ENCODE measurements at regions of chr9 and their contacts with region 1.

Region 1: DNA sequence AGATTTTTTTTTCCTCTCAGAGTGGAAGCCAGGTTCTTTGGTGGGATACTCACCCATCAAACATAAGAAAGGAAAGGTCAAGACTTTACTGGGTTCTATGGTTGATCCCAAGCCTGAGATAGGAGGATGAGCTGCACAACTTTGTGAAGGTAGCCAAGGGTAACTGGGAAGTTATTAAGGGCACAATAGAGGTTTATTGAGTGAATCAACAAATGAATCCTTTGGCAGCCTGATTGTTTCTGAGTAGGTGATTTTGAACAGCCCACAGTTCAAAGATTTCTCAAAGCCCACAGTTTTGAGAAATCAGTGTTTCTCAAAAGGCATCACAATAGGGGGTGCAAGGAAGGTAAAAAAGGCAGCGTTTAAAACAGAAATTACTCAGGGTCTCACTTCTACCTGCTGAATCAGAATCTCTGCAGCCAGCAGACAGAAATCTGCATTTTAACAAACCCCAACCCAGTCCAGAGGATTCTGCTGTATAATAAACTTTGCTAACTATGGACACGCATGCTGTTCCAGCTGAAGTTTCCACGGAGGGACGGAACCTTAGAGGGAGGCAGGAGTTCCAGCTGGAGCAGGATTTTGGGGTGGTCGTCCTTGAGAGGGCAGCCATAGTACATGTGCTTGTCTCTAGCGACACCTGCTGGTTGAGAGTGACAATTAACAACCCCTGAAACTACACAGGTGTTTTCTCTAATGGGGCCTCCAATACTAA is 32.7 kb upstream of the FSD1L start:
- H3K4me3 ChIP-seq: no peak overlapping the region
- H3K27ac ChIP-seq: no peak overlapping the region
- H3K4me1 ChIP-seq: no peaks in the 10 kb centered on the region
- CTCF ChIP-seq: 0 out of 2 replicates have a peak, but pooled peaks have one; percentile 52

Region 2: DNA sequence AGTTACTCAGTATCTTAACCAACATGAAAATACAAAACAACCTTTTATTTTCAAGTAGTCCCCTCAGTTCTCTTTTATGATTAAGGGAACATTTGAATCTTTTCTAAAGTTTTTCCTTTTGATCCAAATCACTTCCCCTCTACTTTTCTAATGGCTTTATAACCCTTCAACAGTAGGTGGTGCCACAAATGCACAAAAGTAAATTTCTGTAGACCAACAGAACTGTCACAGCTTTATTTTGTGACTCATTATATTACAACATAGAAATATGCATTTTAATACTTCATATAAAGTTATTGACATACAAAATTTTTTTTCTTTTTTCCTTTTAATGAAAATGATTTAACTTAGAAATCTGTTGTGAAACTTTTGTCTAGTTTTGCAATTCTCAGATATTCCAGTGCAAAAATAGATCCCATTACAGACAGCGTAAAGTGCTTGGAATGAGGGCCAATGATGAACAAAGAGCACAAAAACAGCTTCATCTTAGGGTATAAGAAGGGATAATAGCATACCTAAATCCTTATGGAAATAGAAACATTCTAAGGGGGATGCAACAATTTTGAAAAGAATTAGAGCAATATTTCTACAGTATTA is 634.2 kb before region 1 on chr9:
- CTCF ChIA-PET with region 1: interaction called, 14 read pairs
- POLR2A ChIA-PET with region 1: no interaction called
- H3K4me3 ChIP-seq: no peak overlapping the region
- H3K27ac ChIP-seq: no peak overlapping the region
- H3K4me1 ChIP-seq: no peaks in the 10 kb centered on the region
- CTCF ChIP-seq: no peak

Region 3: GRCh38 chr9:104808035-104808614 is 607.0 kb before region 1 on chr9:
- CTCF ChIA-PET with region 1: interaction called, 13 read pairs
- POLR2A ChIA-PET with region 1: no interaction called
- H3K4me3 ChIP-seq: no peak overlapping the region
- H3K27ac ChIP-seq: no peak overlapping the region
- H3K4me1 ChIP-seq: no peaks in the 10 kb centered on the region
- CTCF ChIP-seq: no peak

Region 4: DNA sequence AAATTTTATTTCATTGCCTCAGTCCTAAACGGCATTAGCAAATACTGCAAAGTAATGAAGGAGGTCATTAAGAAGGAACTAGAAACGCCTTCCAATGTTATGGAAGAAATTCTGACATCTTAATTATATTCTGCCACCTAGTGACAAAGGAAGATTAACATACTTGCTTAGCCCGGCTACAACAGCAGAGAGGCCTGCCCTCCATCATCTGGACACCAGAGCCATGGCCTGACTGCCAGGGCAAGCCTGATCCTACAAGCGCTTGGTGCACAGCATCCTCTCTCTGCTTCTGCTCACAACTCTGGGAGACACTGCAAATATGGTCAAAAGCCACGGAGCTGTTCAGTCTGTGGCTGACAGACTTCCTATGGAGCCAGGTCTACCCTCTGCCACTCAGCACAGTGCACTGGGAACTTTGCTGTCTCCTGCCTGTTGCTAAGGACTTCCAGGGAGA is 257.9 kb before region 1 on chr9:
- CTCF ChIA-PET with region 1: interaction called, 43 read pairs
- POLR2A ChIA-PET with region 1: no interaction called
- H3K4me3 ChIP-seq: no peak overlapping the region
- H3K27ac ChIP-seq: no peak overlapping the region
- H3K4me1 ChIP-seq: no peaks in the 10 kb centered on the region
- CTCF ChIP-seq: no peak

Region 5: GRCh38 chr9:105431424-105432246 is 16.5 kb after region 1 on chr9:
- CTCF ChIA-PET with region 1: interaction called, 16 read pairs
- POLR2A ChIA-PET with region 1: no interaction called
- H3K4me3 ChIP-seq: no peak overlapping the region
- H3K27ac ChIP-seq: no peak overlapping the region
- H3K4me1 ChIP-seq: no peaks in the 10 kb centered on the region
- CTCF ChIP-seq: no peak

Region 6: DNA sequence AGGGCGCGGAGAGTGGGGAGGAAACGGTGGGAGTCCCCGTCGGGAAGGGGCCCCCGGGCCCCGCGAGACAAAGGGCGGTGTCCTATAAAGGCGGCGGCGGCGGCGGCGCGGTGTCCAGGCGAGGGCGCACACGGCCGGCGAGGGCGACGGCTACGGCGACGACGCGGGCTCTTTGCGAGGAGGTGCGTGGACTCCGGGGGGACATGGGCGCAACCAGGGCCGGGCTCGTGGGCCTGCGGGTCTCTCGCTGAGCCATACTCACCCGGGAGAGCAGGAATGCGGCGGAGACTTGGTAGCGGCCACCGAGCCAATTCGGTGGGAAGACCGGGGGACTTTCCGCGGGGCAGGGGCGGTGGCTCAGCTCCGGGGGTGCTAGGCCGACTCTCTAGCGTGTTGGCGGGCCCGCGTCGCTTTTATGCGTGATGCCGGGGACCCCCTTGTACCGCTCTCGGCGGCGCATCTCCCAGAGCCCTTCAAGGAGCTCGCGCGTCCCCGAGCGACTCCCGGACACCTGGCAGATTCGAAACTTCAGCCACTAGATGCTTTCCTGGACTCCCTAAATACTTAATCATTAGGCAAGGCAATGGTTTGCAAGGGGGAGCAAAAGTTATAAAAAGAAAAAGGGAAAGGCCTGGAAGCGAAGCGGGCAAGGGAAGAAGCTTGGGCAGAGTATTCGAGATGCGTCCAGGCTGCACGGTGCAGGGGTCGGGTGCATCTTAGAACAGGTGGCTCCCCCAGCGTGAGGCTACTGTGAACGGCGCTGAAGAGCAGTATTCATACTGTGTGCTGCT is 241.2 kb after region 1 on chr9:
- CTCF ChIA-PET with region 1: no interaction called
- POLR2A ChIA-PET with region 1: no interaction called
- H3K4me3 ChIP-seq: peak overlapping the region; percentile 52
- H3K27ac ChIP-seq: peak overlapping the region; percentile 48; the same call in 1 of the 2 replicates
- H3K4me1 ChIP-seq: peaks cover 6% of the 10 kb centered on the region
- CTCF ChIP-seq: no peak

Region 7: GRCh38 chr9:105690747-105691146 is 275.6 kb after region 1 on chr9:
- CTCF ChIA-PET with region 1: no interaction called
- POLR2A ChIA-PET with region 1: no interaction called
- H3K4me3 ChIP-seq: no peak overlapping the region
- H3K27ac ChIP-seq: no peak overlapping the region
- H3K4me1 ChIP-seq: peaks cover 2% of the 10 kb centered on the region; the same call in 1 of the 2 replicates
- CTCF ChIP-seq: no peak

Measured in HEK293 (cell line).